ENCODE measurements at regions of chr2 and their contacts with region 1.

Region 1: GRCh38 chr2:20972110-20972509 is 71.8 kb downstream of the APOB start:
- DNase-seq: no peak

Region 2: DNA sequence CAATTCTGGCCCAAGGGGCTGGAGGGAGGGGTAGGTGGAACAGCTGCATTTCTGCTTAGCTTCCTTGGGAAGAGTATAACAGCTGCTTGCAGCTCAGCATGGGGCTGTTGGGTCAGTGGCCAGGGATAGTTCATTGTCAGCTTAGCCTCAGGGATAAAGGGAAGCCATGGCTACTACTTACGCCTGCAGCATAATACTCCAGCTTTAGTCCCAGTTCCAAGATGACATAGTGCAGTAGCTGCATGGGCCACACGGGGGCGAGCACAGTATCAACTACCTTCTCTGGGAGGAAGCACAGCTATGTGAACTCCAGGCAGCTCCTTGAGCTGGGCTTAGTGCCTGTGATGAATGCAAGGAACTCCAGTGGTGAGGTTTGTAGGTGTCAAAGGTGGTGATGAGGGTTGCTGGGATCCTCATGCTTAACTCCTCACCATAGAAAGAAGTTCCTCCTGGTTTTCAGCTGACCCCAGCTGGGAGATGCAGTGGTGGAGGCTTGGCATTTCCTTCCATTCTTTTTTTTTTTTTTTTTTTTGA is 560.7 kb before region 1 on chr2:
- intact Hi-C with region 1: no loop called
- DNase-seq: peak; percentile 95

Region 3: DNA sequence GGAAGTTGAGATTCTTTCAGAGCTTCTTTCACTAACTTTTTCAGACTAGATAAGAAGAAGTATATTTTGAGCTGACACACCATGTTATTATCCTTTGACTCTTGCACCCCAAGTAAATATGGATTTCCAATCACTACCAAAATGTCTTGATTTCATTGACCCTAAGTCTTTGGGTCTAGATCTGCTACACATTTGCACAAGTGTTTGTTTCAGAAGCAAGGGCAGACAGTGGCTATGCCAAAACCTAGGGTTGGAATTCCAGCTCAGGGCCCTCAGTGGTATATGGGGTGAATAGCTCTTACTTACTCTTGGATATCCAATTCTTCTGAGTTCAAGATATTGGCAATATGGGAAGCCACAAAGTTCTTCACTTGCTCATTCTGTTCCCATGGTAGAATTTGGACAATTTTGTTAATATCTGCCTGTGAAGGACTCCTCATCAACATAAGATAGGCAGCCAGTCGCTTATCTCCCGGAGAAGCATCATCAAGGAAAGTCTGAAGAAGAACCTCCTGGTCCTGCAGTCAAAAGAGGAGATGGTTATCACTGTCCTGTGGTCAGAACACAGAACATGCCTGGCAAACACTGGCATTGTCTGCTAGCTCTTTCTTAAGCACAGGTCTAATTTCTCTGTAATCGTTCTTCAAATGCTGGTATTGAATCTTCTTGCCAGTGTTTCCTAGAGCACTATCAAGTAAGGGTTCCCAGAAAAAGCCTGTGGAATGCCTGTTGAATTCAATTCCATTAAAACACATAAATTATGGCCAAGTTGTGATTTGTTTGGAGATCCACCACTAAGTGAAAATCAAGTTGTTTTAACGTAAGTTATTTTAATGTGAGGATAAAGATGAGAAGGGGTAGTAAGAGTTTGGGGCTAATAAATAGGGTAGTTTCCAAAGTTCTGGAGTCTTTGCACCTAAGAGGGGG is 56.2 kb after region 1 on chr2:
- intact Hi-C with region 1: loop called in 1 of 2 experiments (anchors 2 kb)
- DNase-seq: no peak